ENCODE measurements at regions of chr2 and their contacts with region 1.

Region 1: DNA sequence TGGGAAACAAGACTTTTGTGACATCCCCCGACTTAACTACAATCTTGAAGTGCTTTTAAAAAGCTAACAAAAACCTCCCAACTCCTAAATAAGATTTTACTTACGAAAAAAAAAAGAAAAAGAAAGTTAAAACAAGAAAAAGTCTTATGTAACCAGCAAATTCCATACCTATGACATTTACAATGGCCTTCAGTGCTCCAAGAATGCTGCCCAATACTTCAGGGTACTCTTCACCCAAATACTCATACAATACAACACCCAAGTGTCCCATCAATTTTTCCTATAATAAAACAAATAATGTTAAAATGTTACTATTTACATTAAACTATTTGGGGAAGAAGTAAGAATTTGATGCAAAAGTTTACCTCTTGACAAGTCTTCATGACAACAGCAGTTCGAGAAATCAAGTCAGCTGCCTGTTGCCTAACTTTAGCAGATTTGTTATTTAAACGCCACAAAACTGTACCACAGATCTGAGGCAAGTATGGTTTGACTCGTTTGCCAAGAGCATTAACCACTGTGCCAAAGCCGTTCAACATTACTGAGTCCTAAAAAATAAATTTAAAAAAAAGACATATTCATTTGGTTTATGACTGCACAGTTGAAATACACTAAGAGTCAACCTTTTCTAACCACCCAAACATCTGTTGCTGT is 34.8 kb downstream of the SF3B1 start:
- DNase-seq: no peak
- ATAC-seq: no peak
- H3K4me3 ChIP-seq: no peak overlapping the region
- H3K4me3 Mint-ChIP-seq: no peak overlapping the region
- H3K27ac ChIP-seq: no peak overlapping the region
- H3K27ac Mint-ChIP-seq: peak overlapping the region in 1 of 9 donors; percentile 34
- H3K4me1 ChIP-seq: no peaks in the 10 kb centered on the region
- H3K4me1 Mint-ChIP-seq: peaks cover 0 to 5% (median 2%) of the 10 kb centered on the region in 7 donors
- H3K27me3 ChIP-seq: no peaks in the 10 kb centered on the region
- H3K27me3 Mint-ChIP-seq: no peaks in the 10 kb centered on the region

Region 2: GRCh38 chr2:196849895-196850294 is 550.1 kb before region 1 on chr2:
- CTCF ChIA-PET with region 1: no interaction called
- POLR2A ChIA-PET with region 1: no interaction called
- intact Hi-C with region 1: loop called in 1 of 2 experiments (anchors 10 kb)
- DNase-seq: no peak
- ATAC-seq: no peak
- H3K4me3 ChIP-seq: no peak overlapping the region
- H3K4me3 Mint-ChIP-seq: no peak overlapping the region
- H3K27ac ChIP-seq: no peak overlapping the region
- H3K27ac Mint-ChIP-seq: peak overlapping the region in 1 of 9 donors; percentile 10
- H3K4me1 ChIP-seq: no peaks in the 10 kb centered on the region
- H3K4me1 Mint-ChIP-seq: peaks cover 0 to 29% (median 0%) of the 10 kb centered on the region in 7 donors
- H3K27me3 ChIP-seq: no peaks in the 10 kb centered on the region
- H3K27me3 Mint-ChIP-seq: no peaks in the 10 kb centered on the region

Region 3: DNA sequence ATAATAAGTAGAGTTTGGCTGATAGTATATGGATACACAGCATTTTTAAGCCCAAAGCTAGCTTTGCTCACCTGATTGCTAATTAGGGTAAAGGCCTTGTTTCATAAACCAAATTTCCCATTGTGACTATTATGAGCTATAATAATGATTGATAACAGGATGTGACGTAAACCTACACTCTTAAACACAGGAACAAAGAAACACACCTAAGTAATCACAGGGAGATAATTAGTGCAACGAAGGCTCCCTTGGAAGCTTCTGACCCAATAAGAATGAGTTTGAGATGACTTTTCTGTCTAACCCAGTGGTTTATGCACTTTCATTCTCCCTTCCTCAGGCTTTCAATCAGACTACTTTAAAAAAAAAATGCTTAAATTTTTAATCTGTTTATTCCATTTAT is 1374.6 kb after region 1 on chr2:
- CTCF ChIA-PET with region 1: no interaction called
- POLR2A ChIA-PET with region 1: no interaction called
- intact Hi-C with region 1: no loop called
- DNase-seq: no peak
- ATAC-seq: no peak
- H3K4me3 ChIP-seq: no peak overlapping the region
- H3K4me3 Mint-ChIP-seq: no peak overlapping the region
- H3K27ac ChIP-seq: no peak overlapping the region
- H3K27ac Mint-ChIP-seq: no peak overlapping the region
- H3K4me1 ChIP-seq: no peaks in the 10 kb centered on the region
- H3K4me1 Mint-ChIP-seq: no peaks in the 10 kb centered on the region
- H3K27me3 ChIP-seq: no peaks in the 10 kb centered on the region
- H3K27me3 Mint-ChIP-seq: peaks cover 0 to 3% (median 0%) of the 10 kb centered on the region in 5 donors

Measured in naive thymus-derived CD4-positive, alpha-beta T cell (primary cell).